ENCODE measurements at regions of chr14 and their contacts with region 1.

Region 1: DNA sequence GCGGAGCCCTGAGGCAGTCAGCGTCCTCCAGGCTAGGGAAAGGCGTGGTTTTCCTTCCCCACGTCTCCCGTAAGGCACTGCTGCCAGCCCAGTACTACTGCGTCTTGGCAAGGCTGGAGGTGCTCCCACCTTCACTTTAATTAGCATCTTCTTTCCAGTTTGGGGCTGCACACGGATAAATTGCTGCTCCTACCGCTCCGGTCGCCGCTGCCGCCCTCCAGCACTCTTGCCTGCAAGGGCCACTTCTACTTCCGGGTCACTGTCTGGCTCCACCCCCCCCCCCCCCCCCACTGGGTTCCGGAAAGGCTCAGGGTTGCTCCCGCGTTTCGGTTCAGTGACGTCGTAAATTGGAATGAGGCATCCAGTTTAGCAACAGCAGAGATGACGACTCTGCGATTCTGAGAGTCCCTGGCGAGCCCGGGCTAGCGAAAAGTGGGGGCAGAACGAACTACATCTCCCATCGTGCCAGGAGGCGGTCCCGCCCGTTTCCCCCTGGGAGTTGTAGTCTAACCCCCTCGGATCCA is at the start of gene NEDD8:
- DNase-seq: peak; percentile 89 to 92
- ATAC-seq: peak; percentile 91 to 92
- H3K4me3 ChIP-seq: peak within 1 kb of the TSS; percentile 73
- H3K27ac ChIP-seq: peak within 1 kb of the TSS; percentile 85 to 96
- H3K4me1 ChIP-seq: peaks cover 18% of the 10 kb centered on the region
- CTCF ChIP-seq: no peak
- EP300 ChIP-seq: no peak
- POLR2A ChIP-seq: peak; percentile 73
- RAD21 ChIP-seq: no peak
- polyA plus RNA-seq, gene NEDD8: 381 and 433 TPM in 2 replicates

Region 2: GRCh38 chr14:23544511-23545447 is 687.4 kb before region 1 on chr14:
- CTCF ChIA-PET with region 1: no interaction called
- POLR2A ChIA-PET with region 1: interaction called, 11 read pairs
- DNase-seq: no peak
- ATAC-seq: no peak
- H3K4me3 ChIP-seq: no peak overlapping the region
- H3K27ac ChIP-seq: no peak overlapping the region
- H3K4me1 ChIP-seq: no peaks in the 10 kb centered on the region
- CTCF ChIP-seq: no peak
- EP300 ChIP-seq: no peak
- POLR2A ChIP-seq: no peak
- RAD21 ChIP-seq: no peak